ENCODE measurements at regions of chr5 and their contacts with region 1.

Region 1: DNA sequence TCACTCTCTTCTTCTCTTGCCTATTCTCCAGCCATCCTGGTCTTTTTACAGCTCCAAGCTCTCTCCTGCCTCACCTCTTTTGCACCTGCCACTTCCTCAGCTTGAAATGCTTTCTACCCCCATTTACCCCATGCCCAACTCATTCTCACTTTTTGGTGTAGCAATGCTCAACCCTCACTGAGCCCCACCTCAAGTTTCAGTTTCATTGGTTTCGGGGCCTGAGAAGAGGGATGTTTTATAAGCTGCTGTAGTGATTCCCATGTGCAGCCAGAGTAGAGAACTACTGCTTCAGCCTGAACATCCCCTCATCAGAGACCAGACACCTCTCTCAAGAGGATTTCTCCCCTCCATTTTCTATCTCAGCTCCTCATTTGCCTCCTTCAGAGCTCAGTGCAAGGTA is 45.2 kb upstream of the FYB1 start:
- DNase-seq: peak; percentile 64
- H3K4me3 Mint-ChIP-seq: no peak overlapping the region
- H3K27ac Mint-ChIP-seq: peak overlapping the region; percentile 45
- H3K4me1 Mint-ChIP-seq: peaks cover 39% of the 10 kb centered on the region
- H3K27me3 Mint-ChIP-seq: no peaks in the 10 kb centered on the region

Region 2: GRCh38 chr5:39274398-39275085 is 10.0 kb after region 1 on chr5:
- CTCF ChIA-PET with region 1: interaction called, 10 read pairs
- DNase-seq: no peak
- H3K4me3 Mint-ChIP-seq: peak overlapping the region; percentile 64
- H3K27ac Mint-ChIP-seq: peak overlapping the region; percentile 96
- H3K4me1 Mint-ChIP-seq: peaks cover 55% of the 10 kb centered on the region
- H3K27me3 Mint-ChIP-seq: no peaks in the 10 kb centered on the region

Region 3: DNA sequence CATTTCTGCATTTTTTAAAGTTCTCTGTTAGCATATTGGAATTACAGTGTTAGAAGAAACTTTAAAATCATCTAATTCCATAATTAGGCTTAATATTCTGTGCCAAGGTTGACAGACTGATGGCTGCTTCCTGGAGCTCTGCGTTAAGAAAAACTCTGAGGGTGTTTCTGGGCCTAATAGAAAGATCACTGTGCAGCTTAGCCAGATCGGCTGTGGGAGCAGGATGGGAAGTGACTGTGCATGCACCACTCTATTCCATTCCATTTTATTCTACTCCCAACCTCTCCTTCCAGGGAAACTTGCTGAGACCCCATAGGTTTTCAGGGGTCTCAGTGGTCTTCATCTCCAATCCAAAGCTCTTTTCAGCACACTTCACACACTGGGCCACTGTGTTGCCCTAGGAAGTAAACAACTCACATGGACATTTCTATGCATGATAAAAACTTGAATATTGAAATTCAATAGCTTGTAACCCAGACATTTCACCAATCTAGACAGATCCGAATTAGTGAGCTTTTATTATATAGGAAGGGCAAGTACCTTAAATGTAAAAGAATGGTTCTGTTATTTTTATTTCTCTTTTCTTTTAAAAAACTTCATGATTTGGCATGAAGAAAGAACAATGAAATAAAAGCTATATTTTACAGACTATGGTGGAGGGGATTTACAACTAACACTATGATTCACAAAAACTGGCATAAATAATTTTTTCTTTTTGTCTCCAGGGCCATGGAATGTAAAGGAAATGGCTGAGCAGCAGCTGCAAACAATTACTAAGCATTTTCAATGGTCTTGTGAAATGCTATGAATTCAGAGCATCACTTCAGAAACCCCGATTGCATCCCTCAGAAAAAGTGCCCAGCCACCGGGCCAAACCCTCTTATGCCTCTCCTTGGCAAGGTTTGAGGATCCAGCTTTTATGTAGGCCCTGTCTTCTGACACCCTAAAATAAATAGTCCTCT is 211.6 kb after region 1 on chr5:
- CTCF ChIA-PET with region 1: no interaction called
- DNase-seq: no peak
- H3K4me3 Mint-ChIP-seq: no peak overlapping the region
- H3K27ac Mint-ChIP-seq: no peak overlapping the region
- H3K4me1 Mint-ChIP-seq: no peaks in the 10 kb centered on the region
- H3K27me3 Mint-ChIP-seq: peaks cover 4% of the 10 kb centered on the region